Breast epithelium (tissue), 4 donors: ENCODE measurements at regions of chr9 and their contacts with region 1.

Region 1: GRCh38 chr9:74391816-74392215 is 105.3 kb upstream of the RORB start:
- DNase-seq: no peak
- H3K4me3 ChIP-seq: no peak overlapping the region
- H3K27ac ChIP-seq: no peak overlapping the region
- H3K4me1 ChIP-seq: no peaks in the 10 kb centered on the region
- H3K27me3 ChIP-seq: no peaks in the 10 kb centered on the region
- CTCF ChIP-seq: no peak
- POLR2A ChIP-seq: no peak

Region 2: DNA sequence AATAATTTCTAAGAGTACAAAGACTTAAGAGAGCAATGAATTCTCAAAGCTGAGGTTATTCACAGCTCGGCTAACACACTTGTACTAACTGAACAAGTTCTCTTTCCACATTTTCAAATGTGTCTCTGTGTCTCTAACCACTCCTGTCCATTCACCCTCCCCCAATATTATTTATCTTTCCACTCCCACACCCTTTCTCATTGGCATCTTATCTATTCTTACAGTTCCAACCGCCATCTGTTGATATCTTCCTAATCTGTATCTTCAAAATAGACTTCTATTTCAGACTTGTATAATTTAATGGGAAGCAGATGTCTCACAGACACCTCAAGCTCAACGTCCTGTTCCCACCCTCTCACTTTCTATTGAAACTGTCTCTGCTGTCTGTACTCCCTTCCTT is 1034.2 kb before region 1 on chr9:
- intact Hi-C with region 1: loop called (anchors 5 kb)
- DNase-seq: no peak
- H3K4me3 ChIP-seq: no peak overlapping the region
- H3K27ac ChIP-seq: no peak overlapping the region
- H3K4me1 ChIP-seq: no peaks in the 10 kb centered on the region
- H3K27me3 ChIP-seq: no peaks in the 10 kb centered on the region
- CTCF ChIP-seq: no peak
- POLR2A ChIP-seq: no peak

Region 3: DNA sequence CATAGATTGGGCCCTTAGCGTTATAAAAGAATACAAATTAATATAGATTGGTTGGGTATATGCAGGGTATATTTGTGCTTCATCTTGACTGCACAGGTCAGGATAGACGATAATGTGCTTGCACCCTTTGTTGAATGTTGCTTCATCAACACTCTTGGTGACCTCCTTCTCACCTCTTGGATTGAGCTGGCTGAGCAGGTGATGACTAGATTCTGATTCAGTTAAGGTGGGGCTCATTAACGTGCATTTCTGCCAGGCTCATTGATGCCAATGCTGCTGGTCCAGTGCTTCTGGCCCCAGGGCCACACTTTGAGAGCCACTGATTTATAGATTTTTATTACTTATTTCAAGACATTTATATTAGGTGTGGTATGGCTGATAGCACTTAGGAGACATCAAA is 1526.3 kb after region 1 on chr9:
- intact Hi-C with region 1: no loop called
- DNase-seq: no peak
- H3K4me3 ChIP-seq: no peak overlapping the region
- H3K27ac ChIP-seq: no peak overlapping the region
- H3K4me1 ChIP-seq: no peaks in the 10 kb centered on the region
- H3K27me3 ChIP-seq: no peaks in the 10 kb centered on the region
- CTCF ChIP-seq: no peak
- POLR2A ChIP-seq: no peak